Mammary epithelial cell (primary cell): ENCODE measurements at regions of chr6 and their contacts with region 1.

Region 1: DNA sequence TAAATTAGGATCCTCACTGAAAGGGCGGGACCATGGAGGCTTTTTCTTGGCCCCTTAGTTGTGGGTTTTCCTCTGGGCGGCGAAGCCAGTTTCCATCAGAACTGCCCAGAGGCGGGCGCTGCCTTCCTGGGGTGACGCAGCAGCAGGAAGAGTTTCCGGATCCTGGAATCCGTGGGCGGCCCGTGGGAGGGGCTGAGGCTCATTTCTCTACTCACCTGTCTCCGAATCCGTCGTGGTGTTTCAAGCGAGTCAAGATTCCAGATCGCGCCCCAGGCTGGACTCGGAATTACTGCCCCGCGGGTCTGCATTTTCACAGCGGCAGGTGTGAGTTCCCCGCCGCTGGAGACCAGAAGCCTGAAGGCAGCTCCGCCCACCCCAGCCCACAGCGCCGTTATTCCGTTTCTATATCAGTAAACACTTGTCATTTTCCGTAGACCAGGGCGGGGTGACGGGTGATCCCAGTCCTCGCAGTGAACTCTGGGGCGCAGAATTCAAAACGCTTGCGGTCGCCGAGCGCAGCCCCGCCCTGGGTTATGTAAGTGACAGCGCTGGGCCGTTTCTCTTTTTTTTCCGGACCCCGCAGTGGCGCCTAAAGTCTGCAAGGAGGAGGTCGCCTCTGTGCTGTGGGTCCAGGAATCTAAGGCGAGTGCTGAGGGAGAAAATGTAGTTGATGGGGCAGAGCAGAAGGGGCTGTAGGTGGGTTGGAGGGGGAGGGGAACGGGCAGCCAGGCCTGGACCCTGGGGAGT is 27.2 kb upstream of the POU5F1 start:
- DNase-seq: peak; percentile 82
- H3K4me3 ChIP-seq: peak overlapping the region; percentile 51 to 58 (median 57)
- H3K27ac ChIP-seq: peak overlapping the region; percentile 87
- H3K4me1 ChIP-seq: peaks cover 10% of the 10 kb centered on the region
- H3K27me3 ChIP-seq: no peaks in the 10 kb centered on the region
- CTCF ChIP-seq: no peak

Region 2: DNA sequence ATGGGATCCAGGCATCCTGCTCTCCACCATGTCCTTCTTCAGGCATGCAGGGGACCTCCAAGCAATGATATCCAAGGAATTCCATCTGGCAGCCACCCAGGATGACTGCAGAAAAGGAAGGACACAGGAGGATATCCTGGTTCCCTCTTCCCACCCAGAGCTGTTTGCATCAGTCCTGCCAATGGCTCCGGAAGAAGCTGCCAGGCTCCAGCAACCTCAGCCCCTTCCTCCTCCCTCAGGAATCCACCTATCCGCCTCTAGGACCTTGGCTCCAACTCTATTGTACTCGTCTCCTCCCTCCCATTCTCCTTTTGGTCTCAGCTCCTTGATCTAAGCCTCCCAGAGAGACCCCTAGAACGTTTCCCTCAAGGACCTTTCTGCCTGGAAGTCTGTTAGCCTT is 58.1 kb before region 1 on chr6:
- CTCF ChIA-PET with region 1: no interaction called
- dilution Hi-C with region 1: no loop called
- in situ Hi-C with region 1: loop called (anchors 5 kb)
- intact Hi-C with region 1: loop called (anchors 1 kb)
- DNase-seq: no peak
- H3K4me3 ChIP-seq: no peak overlapping the region
- H3K27ac ChIP-seq: no peak overlapping the region
- H3K4me1 ChIP-seq: peaks cover 24% of the 10 kb centered on the region
- H3K27me3 ChIP-seq: no peaks in the 10 kb centered on the region
- CTCF ChIP-seq: no peak

Region 3: GRCh38 chr6:31271641-31272357 is 74.1 kb after region 1 on chr6 and contains the start of gene HLA-C:
- CTCF ChIA-PET with region 1: interaction called, 3 read pairs
- dilution Hi-C with region 1: no loop called
- in situ Hi-C with region 1: no loop called
- intact Hi-C with region 1: loop called (anchors 1 kb)
- DNase-seq: peak; percentile 96
- H3K4me3 ChIP-seq: peak within 1 kb of the TSS; percentile 67 to 89 (median 70)
- H3K27ac ChIP-seq: peak within 1 kb of the TSS; percentile 76
- H3K4me1 ChIP-seq: peaks cover 5% of the 10 kb centered on the region
- H3K27me3 ChIP-seq: peaks cover 4% of the 10 kb centered on the region
- CTCF ChIP-seq: peak in 1 of 2 donors; percentile 36
- total RNA-seq, gene HLA-C: 82.5 to 256 TPM

Region 4: GRCh38 chr6:31366693-31367470 is 169.2 kb after region 1 on chr6:
- CTCF ChIA-PET with region 1: interaction called, 5 read pairs
- dilution Hi-C with region 1: no loop called
- in situ Hi-C with region 1: loop called (anchors 5 kb)
- intact Hi-C with region 1: loop called (anchors 1 kb)
- DNase-seq: peak; percentile 85
- H3K4me3 ChIP-seq: peak overlapping the region in 2 of 3 experiments; percentile 23 to 44
- H3K27ac ChIP-seq: no peak overlapping the region
- H3K4me1 ChIP-seq: peaks cover 4% of the 10 kb centered on the region
- H3K27me3 ChIP-seq: peaks cover 2% of the 10 kb centered on the region
- CTCF ChIP-seq: peak; percentile 71 to 91